ENCODE measurements at regions of chr2 and their contacts with region 1.

Region 1: GRCh38 chr2:73293534-73294171 is at the start of gene EGR4:
- DNase-seq: peak; percentile 92
- H3K4me3 Mint-ChIP-seq: peak within 1 kb of the TSS; percentile 69
- H3K27ac Mint-ChIP-seq: no peak within 1 kb of the TSS
- H3K4me1 Mint-ChIP-seq: peaks cover 16% of the 10 kb centered on the region
- H3K27me3 Mint-ChIP-seq: peaks cover 84% of the 10 kb centered on the region
- total RNA-seq, gene EGR4: not detected

Region 2: GRCh38 chr2:73212448-73213176 is 81.0 kb before region 1 on chr2:
- CTCF ChIA-PET with region 1: interaction called, 19 read pairs
- POLR2A ChIA-PET with region 1: interaction called, 3 read pairs
- DNase-seq: peak; percentile 78
- H3K4me3 Mint-ChIP-seq: no peak overlapping the region
- H3K27ac Mint-ChIP-seq: no peak overlapping the region
- H3K4me1 Mint-ChIP-seq: peaks cover 31% of the 10 kb centered on the region
- H3K27me3 Mint-ChIP-seq: peaks cover 6% of the 10 kb centered on the region

Region 3: DNA sequence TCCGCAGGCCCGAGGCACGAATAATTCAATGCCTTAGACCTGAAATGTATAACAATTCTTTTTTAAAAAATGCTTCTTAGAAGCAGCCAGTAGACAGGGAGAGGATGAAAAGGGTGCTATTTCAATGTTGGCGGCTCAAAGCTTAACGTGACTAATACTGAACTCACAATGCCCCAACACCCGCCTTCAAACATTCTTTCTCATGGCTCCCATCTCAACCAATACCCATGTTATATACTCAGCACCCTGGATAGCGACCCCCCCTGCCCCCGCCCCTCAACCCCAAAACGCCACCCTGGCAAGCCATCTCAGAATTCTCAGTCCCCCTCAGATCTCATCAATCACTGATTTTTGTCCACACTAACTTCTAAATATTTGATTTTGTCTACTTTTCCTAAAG is 13.8 kb before region 1 on chr2:
- CTCF ChIA-PET with region 1: interaction called, 15 read pairs
- POLR2A ChIA-PET with region 1: interaction called, 4 read pairs
- DNase-seq: no peak
- H3K4me3 Mint-ChIP-seq: no peak overlapping the region
- H3K27ac Mint-ChIP-seq: no peak overlapping the region
- H3K4me1 Mint-ChIP-seq: peaks cover 11% of the 10 kb centered on the region
- H3K27me3 Mint-ChIP-seq: no peaks in the 10 kb centered on the region

Region 4: GRCh38 chr2:73385595-73386341 is 92.1 kb after region 1 on chr2 and contains the start of gene ALMS1:
- CTCF ChIA-PET with region 1: interaction called, 4 read pairs
- POLR2A ChIA-PET with region 1: interaction called, 13 read pairs
- DNase-seq: peak; percentile 92
- H3K4me3 Mint-ChIP-seq: peak within 1 kb of the TSS; percentile 90
- H3K27ac Mint-ChIP-seq: peak within 1 kb of the TSS; percentile 85
- H3K4me1 Mint-ChIP-seq: peaks cover 32% of the 10 kb centered on the region
- H3K27me3 Mint-ChIP-seq: peaks cover 4% of the 10 kb centered on the region
- total RNA-seq, gene ALMS1: 16.1 to 20.4 TPM